ENCODE measurements at regions of chr6 and their contacts with region 1.

Region 1: GRCh38 chr6:7312616-7313504 is at the start of gene SSR1:
- DNase-seq: peak; percentile 98

Region 2: DNA sequence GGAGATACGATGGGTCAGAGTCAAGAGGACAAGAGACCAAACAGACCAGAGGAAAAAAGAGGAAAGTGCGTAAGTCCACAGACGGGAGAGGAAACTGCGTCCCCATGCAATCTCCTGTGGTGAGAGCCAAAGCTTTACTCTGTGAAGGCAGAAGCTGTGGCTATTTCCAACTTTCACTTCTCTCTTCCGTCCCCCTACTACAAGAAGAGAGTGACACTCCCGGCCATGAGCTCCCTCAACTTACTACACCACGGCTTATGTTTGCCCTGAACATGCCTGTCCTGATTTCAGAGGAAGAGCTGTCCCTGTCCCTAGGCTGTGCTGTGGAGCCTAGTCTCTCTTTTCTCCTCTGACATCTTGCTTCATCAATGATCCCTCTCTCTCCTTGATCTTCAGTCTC is 11.7 kb after region 1 on chr6:
- CTCF ChIA-PET with region 1: no interaction called
- POLR2A ChIA-PET with region 1: interaction called, 14 read pairs
- DNase-seq: no peak

Region 3: GRCh38 chr6:7389451-7390225 is 76.8 kb after region 1 on chr6 and contains the starts of genes CAGE1 and RIOK1:
- CTCF ChIA-PET with region 1: interaction called, 3 read pairs
- POLR2A ChIA-PET with region 1: interaction called, 20 read pairs
- DNase-seq: peak; percentile 95